ENCODE measurements at regions of chr11 and their contacts with region 1.

Region 1: DNA sequence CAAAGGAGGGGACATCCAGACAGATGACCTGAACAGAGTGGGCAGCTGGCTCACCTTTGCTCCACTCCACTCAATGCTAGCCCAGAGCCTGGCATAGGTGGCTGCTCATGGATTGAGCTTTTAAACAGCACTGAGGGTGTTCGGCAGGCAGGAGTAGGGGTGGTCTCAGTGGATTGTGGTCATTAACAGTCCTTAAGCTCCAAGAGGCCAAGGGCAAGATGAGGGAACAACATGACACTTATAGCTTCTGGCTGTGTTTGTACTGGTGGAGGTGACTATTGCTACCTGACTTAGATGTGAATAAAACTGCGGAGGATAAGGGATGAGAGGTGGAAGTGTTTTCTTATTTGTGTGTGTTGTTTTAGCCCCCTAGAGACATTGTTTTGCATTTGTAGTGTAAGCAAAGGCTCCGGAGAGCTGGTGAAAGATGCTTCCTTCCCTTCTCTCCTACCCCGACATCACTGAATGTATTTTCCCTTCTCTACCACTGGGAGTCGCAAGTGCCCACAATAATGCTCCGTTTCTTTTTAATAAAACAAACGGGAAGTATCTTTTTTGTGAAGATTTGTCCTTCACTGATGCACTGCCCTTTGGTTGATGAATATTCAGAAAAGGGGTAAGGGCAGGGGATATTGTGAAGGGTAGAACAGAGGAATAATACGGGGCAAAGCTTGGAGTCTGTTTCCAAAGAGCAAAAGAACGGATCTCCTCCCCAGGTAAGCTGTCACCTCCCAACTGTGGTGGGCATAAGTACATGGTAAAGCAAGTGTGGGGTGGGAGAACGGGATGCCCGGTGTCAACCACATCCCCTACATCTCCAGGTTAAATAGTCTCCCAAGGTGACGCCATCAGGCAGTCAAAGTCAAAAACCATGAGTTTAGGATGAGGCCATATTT is 27.5 kb upstream of the MTNR1B start:
- DNase-seq: peak; percentile 71
- H3K4me3 Mint-ChIP-seq: no peak overlapping the region
- H3K27ac Mint-ChIP-seq: no peak overlapping the region
- H3K4me1 Mint-ChIP-seq: no peaks in the 10 kb centered on the region
- H3K27me3 Mint-ChIP-seq: no peaks in the 10 kb centered on the region
- CTCF ChIP-seq: peak; percentile 78

Region 2: GRCh38 chr11:92931746-92932422 is 10.0 kb before region 1 on chr11:
- CTCF ChIA-PET with region 1: interaction called, 14 read pairs
- POLR2A ChIA-PET with region 1: interaction called, 7 read pairs
- intact Hi-C with region 1: no loop called
- DNase-seq: no peak
- H3K4me3 Mint-ChIP-seq: no peak overlapping the region
- H3K27ac Mint-ChIP-seq: no peak overlapping the region
- H3K4me1 Mint-ChIP-seq: peaks cover 15% of the 10 kb centered on the region
- H3K27me3 Mint-ChIP-seq: no peaks in the 10 kb centered on the region
- CTCF ChIP-seq: no peak

Region 3: DNA sequence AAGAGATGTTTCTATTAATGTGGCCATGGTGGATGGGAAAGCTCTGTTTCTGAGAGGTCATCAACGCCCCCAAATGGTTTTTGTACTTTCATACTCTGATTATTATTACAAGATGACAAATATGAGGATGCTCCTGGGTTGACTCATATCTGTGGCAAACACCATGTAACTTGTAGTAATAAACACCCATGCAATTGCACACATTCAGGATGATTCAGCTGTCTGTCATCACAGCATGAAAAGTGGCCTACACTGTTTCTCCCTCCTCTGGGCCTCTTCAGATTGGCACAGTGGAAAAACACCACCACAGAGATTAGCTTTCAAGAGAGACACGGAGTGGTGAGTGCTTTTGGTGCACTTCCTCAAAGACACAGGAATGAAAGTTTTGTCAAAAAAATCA is 113.0 kb after region 1 on chr11:
- CTCF ChIA-PET with region 1: interaction called, 46 read pairs
- POLR2A ChIA-PET with region 1: interaction called, 5 read pairs
- intact Hi-C with region 1: loop called (anchors 2 kb)
- DNase-seq: peak; percentile 98
- H3K4me3 Mint-ChIP-seq: peak overlapping the region; percentile 1
- H3K27ac Mint-ChIP-seq: peak overlapping the region; percentile 93
- H3K4me1 Mint-ChIP-seq: peaks cover 33% of the 10 kb centered on the region
- H3K27me3 Mint-ChIP-seq: no peaks in the 10 kb centered on the region
- CTCF ChIP-seq: no peak

Region 4: GRCh38 chr11:93169950-93170561 is 228.1 kb after region 1 on chr11:
- CTCF ChIA-PET with region 1: interaction called, 87 read pairs
- POLR2A ChIA-PET with region 1: interaction called, 5 read pairs
- intact Hi-C with region 1: loop called (anchors 1 kb)
- DNase-seq: peak; percentile 63
- H3K4me3 Mint-ChIP-seq: no peak overlapping the region
- H3K27ac Mint-ChIP-seq: no peak overlapping the region
- H3K4me1 Mint-ChIP-seq: no peaks in the 10 kb centered on the region
- H3K27me3 Mint-ChIP-seq: no peaks in the 10 kb centered on the region
- CTCF ChIP-seq: peak; percentile 44

Region 5: GRCh38 chr11:93225662-93226061 is 283.7 kb after region 1 on chr11:
- CTCF ChIA-PET with region 1: interaction called, 118 read pairs
- POLR2A ChIA-PET with region 1: interaction called, 11 read pairs
- intact Hi-C with region 1: loop called (anchors 1 kb)
- DNase-seq: peak; percentile 43
- H3K4me3 Mint-ChIP-seq: no peak overlapping the region
- H3K27ac Mint-ChIP-seq: no peak overlapping the region
- H3K4me1 Mint-ChIP-seq: no peaks in the 10 kb centered on the region
- H3K27me3 Mint-ChIP-seq: no peaks in the 10 kb centered on the region
- CTCF ChIP-seq: peak; percentile 48

Region 6: GRCh38 chr11:93652161-93652597 is 710.3 kb after region 1 on chr11:
- CTCF ChIA-PET with region 1: interaction called, 3 read pairs
- POLR2A ChIA-PET with region 1: no interaction called
- intact Hi-C with region 1: loop called (anchors 10 kb)
- DNase-seq: peak; percentile 64
- H3K4me3 Mint-ChIP-seq: no peak overlapping the region
- H3K27ac Mint-ChIP-seq: no peak overlapping the region
- H3K4me1 Mint-ChIP-seq: peaks cover 6% of the 10 kb centered on the region
- H3K27me3 Mint-ChIP-seq: peaks cover 50% of the 10 kb centered on the region
- CTCF ChIP-seq: peak; percentile 59

Measured in MCF 10A (cell line).